WTC11 (cell line): ENCODE measurements at regions of chr1 and their contacts with region 1.

Region 1: GRCh38 chr1:60281360-60281932 is 207.9 kb upstream of the C1orf87 start:
- DNase-seq: peak; percentile 72
- ATAC-seq: peak; percentile 100
- H3K4me3 Mint-ChIP-seq: no peak overlapping the region
- H3K27ac Mint-ChIP-seq: no peak overlapping the region
- H3K4me1 Mint-ChIP-seq: peaks cover 13% of the 10 kb centered on the region
- H3K27me3 Mint-ChIP-seq: no peaks in the 10 kb centered on the region
- CTCF ChIP-seq: peak; percentile 70

Region 2: DNA sequence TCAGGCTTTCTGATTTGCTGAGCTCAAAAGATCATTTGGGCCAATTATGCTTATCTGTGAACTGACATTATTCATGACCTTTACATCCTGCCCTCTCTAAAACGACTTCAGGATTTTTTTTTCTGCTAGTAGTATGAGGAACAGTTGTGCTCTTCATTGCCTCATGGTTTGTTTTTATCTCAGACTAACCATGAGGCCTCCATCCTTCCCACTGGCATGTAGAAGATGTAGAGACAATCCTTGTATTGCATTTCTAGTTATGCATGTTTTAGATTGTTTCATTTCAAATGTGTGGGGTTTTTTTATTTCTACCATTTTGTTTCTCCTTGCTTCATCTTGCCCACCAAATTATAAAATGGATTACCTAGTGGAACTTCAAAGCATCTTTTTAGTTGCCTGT is 125.1 kb before region 1 on chr1:
- CTCF ChIA-PET with region 1: interaction called, 21 read pairs
- POLR2A ChIA-PET with region 1: no interaction called
- DNase-seq: no peak
- ATAC-seq: no peak
- H3K4me3 Mint-ChIP-seq: no peak overlapping the region
- H3K27ac Mint-ChIP-seq: no peak overlapping the region
- H3K4me1 Mint-ChIP-seq: peaks cover 24% of the 10 kb centered on the region
- H3K27me3 Mint-ChIP-seq: no peaks in the 10 kb centered on the region
- CTCF ChIP-seq: no peak

Region 3: GRCh38 chr1:60185684-60186083 is 95.8 kb before region 1 on chr1:
- CTCF ChIA-PET with region 1: no interaction called
- POLR2A ChIA-PET with region 1: no interaction called
- DNase-seq: no peak
- ATAC-seq: no peak
- H3K4me3 Mint-ChIP-seq: no peak overlapping the region
- H3K27ac Mint-ChIP-seq: no peak overlapping the region
- H3K4me1 Mint-ChIP-seq: no peaks in the 10 kb centered on the region
- H3K27me3 Mint-ChIP-seq: no peaks in the 10 kb centered on the region; the same call in none of the 2 replicates
- CTCF ChIP-seq: no peak

Region 4: GRCh38 chr1:60376196-60376848 is 94.9 kb after region 1 on chr1:
- CTCF ChIA-PET with region 1: no interaction called
- POLR2A ChIA-PET with region 1: no interaction called
- DNase-seq: no peak
- ATAC-seq: no peak
- H3K4me3 Mint-ChIP-seq: no peak overlapping the region
- H3K27ac Mint-ChIP-seq: no peak overlapping the region
- H3K4me1 Mint-ChIP-seq: no peaks in the 10 kb centered on the region
- H3K27me3 Mint-ChIP-seq: no peaks in the 10 kb centered on the region
- CTCF ChIP-seq: no peak

Region 5: DNA sequence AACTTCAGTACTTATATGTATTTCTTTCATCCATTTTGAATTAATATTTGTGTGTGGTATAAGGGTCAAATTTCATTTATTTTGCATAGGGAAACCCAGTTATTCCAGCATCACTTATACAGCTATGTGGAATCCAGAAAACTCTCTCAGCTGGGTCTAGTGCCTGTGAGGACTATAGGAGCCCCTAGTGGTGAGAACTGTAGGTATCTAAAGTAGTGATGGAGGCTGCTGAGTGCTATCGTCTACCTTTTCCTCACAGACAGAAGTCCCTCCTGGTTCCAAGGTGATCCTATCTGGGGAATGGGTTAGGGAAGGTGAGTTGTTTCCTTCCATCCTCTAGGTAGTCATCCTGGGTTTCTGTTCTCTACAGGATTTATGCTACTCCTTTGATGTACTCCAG is 144.1 kb after region 1 on chr1:
- CTCF ChIA-PET with region 1: interaction called, 14 read pairs
- POLR2A ChIA-PET with region 1: no interaction called
- DNase-seq: no peak
- ATAC-seq: peak; percentile 94
- H3K4me3 Mint-ChIP-seq: no peak overlapping the region
- H3K27ac Mint-ChIP-seq: no peak overlapping the region
- H3K4me1 Mint-ChIP-seq: peaks cover 4% of the 10 kb centered on the region; the same call in 1 of the 2 replicates
- H3K27me3 Mint-ChIP-seq: no peaks in the 10 kb centered on the region
- CTCF ChIP-seq: no peak

Region 6: DNA sequence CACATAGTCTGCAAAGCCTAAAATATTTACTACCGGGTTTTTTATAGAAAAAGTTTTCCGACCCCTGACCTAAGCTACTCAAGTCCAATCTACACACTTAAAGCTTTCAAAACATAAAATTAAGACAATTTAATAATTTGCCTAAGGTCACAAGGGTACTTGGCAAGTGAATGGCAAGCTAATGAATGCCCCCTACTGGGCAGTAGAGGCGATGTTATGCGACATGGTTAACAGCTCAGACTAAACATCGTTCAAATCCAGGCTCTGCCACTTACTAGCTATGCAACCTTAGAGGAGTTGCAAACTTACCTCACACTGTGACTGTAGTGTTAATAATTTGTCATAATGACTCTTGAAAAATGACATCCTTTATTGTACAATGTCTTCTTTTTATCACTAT is 483.8 kb after region 1 on chr1:
- CTCF ChIA-PET with region 1: interaction called, 27 read pairs
- POLR2A ChIA-PET with region 1: interaction called, 3 read pairs
- DNase-seq: peak; percentile 32
- ATAC-seq: peak; percentile 82
- H3K4me3 Mint-ChIP-seq: no peak overlapping the region
- H3K27ac Mint-ChIP-seq: no peak overlapping the region
- H3K4me1 Mint-ChIP-seq: no peaks in the 10 kb centered on the region
- H3K27me3 Mint-ChIP-seq: no peaks in the 10 kb centered on the region
- CTCF ChIP-seq: 0 out of 2 replicates have a peak, but pooled peaks have one; percentile 38

Region 7: GRCh38 chr1:60848583-60849188 is 567.2 kb after region 1 on chr1:
- CTCF ChIA-PET with region 1: interaction called, 10 read pairs
- POLR2A ChIA-PET with region 1: no interaction called
- DNase-seq: no peak
- ATAC-seq: peak; percentile 78
- H3K4me3 Mint-ChIP-seq: no peak overlapping the region
- H3K27ac Mint-ChIP-seq: peak overlapping the region; percentile 30
- H3K4me1 Mint-ChIP-seq: peaks cover 23% of the 10 kb centered on the region
- H3K27me3 Mint-ChIP-seq: no peaks in the 10 kb centered on the region
- CTCF ChIP-seq: peak; percentile 61

Region 8: DNA sequence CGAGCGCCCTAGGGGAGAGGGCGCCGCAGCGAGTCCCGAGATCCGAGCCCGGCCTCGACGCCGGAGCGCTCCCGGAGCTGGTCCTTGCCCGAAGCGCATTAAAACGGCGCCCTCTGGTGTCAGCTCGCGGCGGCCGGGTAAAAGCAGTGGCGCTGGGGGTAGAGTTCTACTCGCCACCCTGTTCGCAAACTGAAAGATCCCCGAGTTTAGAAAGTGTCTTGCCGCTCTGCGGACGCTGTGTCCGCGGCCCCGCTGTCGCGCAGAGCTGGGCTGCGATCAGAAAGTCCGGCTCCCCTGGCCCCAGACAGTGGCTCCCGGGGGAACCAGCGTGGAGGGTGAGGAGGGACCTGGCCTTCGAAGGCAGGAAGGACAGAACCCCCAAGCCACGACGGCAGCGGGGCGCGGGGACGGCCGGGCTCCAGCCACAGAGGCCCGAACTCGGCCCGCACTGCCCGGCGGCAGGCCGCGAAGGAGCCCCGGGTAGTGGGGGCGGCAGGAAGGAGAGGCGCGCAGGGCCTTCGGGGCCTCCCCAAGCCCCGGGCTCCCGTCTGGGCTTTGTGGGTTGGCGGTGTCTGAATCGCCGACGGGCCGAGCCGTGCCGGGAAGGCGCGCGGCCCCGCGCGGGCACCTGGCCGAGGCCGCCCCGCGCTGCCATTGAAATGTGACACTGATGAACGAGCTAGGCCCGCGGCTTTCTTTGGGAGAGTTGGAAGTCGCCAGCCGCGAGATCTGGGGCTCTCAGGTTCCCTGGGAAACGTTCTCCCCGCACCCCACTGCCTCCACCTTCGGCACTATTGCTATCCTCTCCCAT is 761.8 kb after region 1 on chr1:
- CTCF ChIA-PET with region 1: interaction called, 10 read pairs
- POLR2A ChIA-PET with region 1: no interaction called
- DNase-seq: peak; percentile 96
- ATAC-seq: peak; percentile 91
- H3K4me3 Mint-ChIP-seq: peak overlapping the region; percentile 78
- H3K27ac Mint-ChIP-seq: no peak overlapping the region
- H3K4me1 Mint-ChIP-seq: peaks cover 12% of the 10 kb centered on the region
- H3K27me3 Mint-ChIP-seq: peaks cover 35% of the 10 kb centered on the region
- CTCF ChIP-seq: peak; percentile 75